ENCODE measurements at regions of chr17 and their contacts with region 1.

Region 1: DNA sequence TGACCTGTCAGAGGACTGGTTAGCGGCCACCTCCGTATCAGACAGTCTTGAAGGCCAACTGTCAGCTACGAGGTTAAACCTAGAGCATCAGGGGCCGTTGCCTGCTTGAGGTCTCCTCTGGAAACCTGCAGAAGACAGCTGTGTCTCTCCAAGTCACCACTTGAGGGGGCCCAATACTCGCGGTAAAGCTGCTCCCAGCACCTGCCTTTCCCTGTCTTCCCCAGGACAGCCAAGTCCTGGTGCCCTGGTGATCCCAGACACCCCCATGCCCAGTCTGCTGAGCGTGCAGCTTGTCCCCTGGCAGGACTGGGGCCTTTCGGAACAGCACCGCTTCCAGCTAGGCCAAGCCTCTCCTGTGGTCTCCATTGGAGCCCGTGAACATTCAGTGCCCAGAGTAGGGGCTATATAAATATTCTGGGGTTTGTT is 80.1 kb downstream of the DNAH17 start:
- DNase-seq: peak; percentile 82
- H3K4me3 ChIP-seq: no peak overlapping the region
- H3K27ac ChIP-seq: no peak overlapping the region
- H3K4me1 ChIP-seq: no peaks in the 10 kb centered on the region
- H3K27me3 ChIP-seq: no peaks in the 10 kb centered on the region
- CTCF ChIP-seq: peak in 2 of 3 experiments; percentile 47 to 71
- POLR2A ChIP-seq: no peak

Region 2: GRCh38 chr17:78708510-78708973 is 211.4 kb after region 1 on chr17:
- intact Hi-C with region 1: loop called (anchors 10 kb)
- DNase-seq: peak; percentile 70
- H3K4me3 ChIP-seq: no peak overlapping the region
- H3K27ac ChIP-seq: no peak overlapping the region
- H3K4me1 ChIP-seq: peaks cover 4% of the 10 kb centered on the region
- H3K27me3 ChIP-seq: no peaks in the 10 kb centered on the region
- CTCF ChIP-seq: peak; percentile 55 to 74 (median 57)
- POLR2A ChIP-seq: no peak

Measured in testis (tissue), 5 donors.